Esophagus muscularis mucosa (tissue), 4 donors: ENCODE measurements at regions of chr3 and their contacts with region 1.

Region 1: GRCh38 chr3:159260049-159260662 is 458.3 kb downstream of the MFSD1 start:
- DNase-seq: no peak
- H3K4me3 ChIP-seq: no peak overlapping the region
- H3K27ac ChIP-seq: no peak overlapping the region
- H3K4me1 ChIP-seq: no peaks in the 10 kb centered on the region
- H3K27me3 ChIP-seq: no peaks in the 10 kb centered on the region
- CTCF ChIP-seq: peak; percentile 69 to 73 (median 72)
- EP300 ChIP-seq: no peak
- POLR2A ChIP-seq: no peak

Region 2: GRCh38 chr3:158845765-158846350 is 414.3 kb before region 1 on chr3:
- intact Hi-C with region 1: loop called (anchors 2 kb)
- DNase-seq: no peak
- H3K4me3 ChIP-seq: no peak overlapping the region
- H3K27ac ChIP-seq: no peak overlapping the region
- H3K4me1 ChIP-seq: peaks cover 0 to 5% (median 0%) of the 10 kb centered on the region in 4 donors
- H3K27me3 ChIP-seq: no peaks in the 10 kb centered on the region
- CTCF ChIP-seq: peak; percentile 61 to 72 (median 62)
- EP300 ChIP-seq: no peak
- POLR2A ChIP-seq: no peak

Region 3: DNA sequence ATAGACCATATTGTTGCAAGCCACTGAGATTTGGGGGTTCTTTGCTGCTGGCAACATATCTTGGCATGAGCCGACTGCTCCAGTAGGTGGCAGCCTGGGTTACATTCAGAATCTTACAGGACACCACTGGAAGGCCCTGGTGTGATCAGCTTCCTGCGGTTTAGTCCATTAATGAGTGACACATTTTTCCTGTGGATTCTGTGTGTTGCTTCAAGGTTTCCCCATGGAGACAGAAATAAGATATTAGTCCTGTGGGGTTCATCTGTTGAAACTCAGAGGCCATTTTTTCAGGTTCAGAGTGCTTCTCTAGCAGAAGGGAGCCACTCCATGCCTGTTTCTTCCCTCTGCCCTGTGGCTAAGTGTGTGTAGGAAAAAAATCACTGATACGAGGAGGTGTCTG is 342.1 kb before region 1 on chr3:
- intact Hi-C with region 1: loop called (anchors 5 kb)
- DNase-seq: peak; percentile 55
- H3K4me3 ChIP-seq: no peak overlapping the region
- H3K27ac ChIP-seq: no peak overlapping the region
- H3K4me1 ChIP-seq: no peaks in the 10 kb centered on the region
- H3K27me3 ChIP-seq: no peaks in the 10 kb centered on the region
- CTCF ChIP-seq: peak in 2 of 3 experiments; percentile 24 to 38
- EP300 ChIP-seq: no peak
- POLR2A ChIP-seq: no peak

Region 4: GRCh38 chr3:159165961-159166360 is 94.2 kb before region 1 on chr3:
- intact Hi-C with region 1: no loop called
- DNase-seq: no peak
- H3K4me3 ChIP-seq: no peak overlapping the region
- H3K27ac ChIP-seq: no peak overlapping the region
- H3K4me1 ChIP-seq: peaks cover 0 to 15% (median 0%) of the 10 kb centered on the region in 4 donors
- H3K27me3 ChIP-seq: no peaks in the 10 kb centered on the region
- CTCF ChIP-seq: no peak
- EP300 ChIP-seq: no peak
- POLR2A ChIP-seq: no peak

Region 5: DNA sequence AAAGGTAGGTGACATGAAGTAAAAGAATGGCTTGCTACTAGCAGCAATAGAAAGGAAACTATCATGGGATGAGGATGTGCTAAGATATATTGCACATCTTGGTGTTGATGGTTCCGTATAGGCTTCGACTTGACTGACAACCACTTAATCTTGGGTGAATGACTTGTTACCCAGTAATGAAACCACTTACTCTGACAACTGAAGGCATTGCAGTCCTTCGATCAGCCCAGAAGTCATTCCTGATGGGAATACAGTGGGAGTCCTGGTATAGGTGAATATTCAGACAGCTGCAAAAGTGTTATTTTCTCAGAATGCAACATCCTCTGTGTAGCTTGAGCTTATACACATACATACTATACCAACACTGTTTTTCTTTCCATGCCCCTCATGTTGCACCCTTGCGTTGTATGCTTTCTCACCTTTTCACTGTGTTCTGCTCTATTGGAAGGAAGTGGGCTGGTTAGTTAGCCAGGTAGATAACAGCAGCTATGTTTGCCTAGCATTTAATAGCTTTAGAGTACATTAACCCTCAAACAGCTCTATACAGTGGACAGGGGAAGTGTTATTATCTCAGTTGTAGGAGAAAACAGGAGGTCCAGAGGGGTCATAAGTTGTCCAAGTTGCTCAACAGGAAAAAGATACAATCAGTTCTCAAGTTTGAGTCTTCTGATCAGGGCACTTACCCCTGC is 81.8 kb before region 1 on chr3:
- intact Hi-C with region 1: no loop called
- DNase-seq: no peak
- H3K4me3 ChIP-seq: no peak overlapping the region
- H3K27ac ChIP-seq: no peak overlapping the region
- H3K4me1 ChIP-seq: no peaks in the 10 kb centered on the region
- H3K27me3 ChIP-seq: no peaks in the 10 kb centered on the region
- CTCF ChIP-seq: no peak
- EP300 ChIP-seq: no peak
- POLR2A ChIP-seq: no peak

Region 6: GRCh38 chr3:159548675-159549335 is 288.6 kb after region 1 on chr3:
- intact Hi-C with region 1: no loop called
- DNase-seq: no peak
- H3K4me3 ChIP-seq: no peak overlapping the region
- H3K27ac ChIP-seq: no peak overlapping the region
- H3K4me1 ChIP-seq: no peaks in the 10 kb centered on the region
- H3K27me3 ChIP-seq: no peaks in the 10 kb centered on the region
- CTCF ChIP-seq: no peak
- EP300 ChIP-seq: no peak
- POLR2A ChIP-seq: no peak

Region 7: GRCh38 chr3:159804726-159805410 is 544.7 kb after region 1 on chr3:
- intact Hi-C with region 1: loop called (anchors 2 kb)
- DNase-seq: peak; percentile 92
- H3K4me3 ChIP-seq: peak overlapping the region in 2 of 4 donors; percentile 9 to 22
- H3K27ac ChIP-seq: peak overlapping the region; percentile 62 to 90 (median 84)
- H3K4me1 ChIP-seq: peaks cover 45 to 88% (median 85%) of the 10 kb centered on the region in 4 donors
- H3K27me3 ChIP-seq: no peaks in the 10 kb centered on the region
- CTCF ChIP-seq: peak; percentile 82 to 91 (median 89)
- EP300 ChIP-seq: peak; percentile 59
- POLR2A ChIP-seq: no peak